Activated T-helper 1 cell treated with anti-CD3 and anti-CD28 coated beads, Interleukin-12 subunit alpha, Interleukin-12 subunit beta, Interleukin-2, Interleukin-4 antibody, amounts not matched to agents 30 ng/mL and 10 ng/mL and 1 ng/mL, durations not matched to agents 14 hours and 24 hours and 36 hours (primary cell): ENCODE measurements at regions of chr3 and their contacts with region 1.

Region 1: DNA sequence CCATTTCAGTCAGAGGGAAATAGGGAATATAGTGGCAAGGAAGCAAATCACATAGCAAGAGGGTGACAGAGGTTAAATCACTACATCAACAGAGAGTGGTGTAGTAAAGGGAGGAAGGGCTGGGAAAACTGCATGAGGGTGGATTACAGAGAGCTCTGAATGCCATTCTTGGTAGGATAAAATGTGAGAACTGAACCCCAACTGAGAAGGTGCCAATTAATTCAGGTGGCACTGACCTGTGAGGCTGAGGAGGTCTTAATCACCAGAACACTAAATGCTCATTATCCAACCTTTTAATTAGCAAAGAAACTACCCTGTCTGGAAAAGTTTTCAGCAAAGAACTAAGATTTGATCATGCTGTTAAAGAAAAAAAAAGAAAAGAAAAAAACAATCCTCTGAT is 202.7 kb downstream of the LRRN1 start:
- DNase-seq: no peak
- H3K4me3 Mint-ChIP-seq: no peak overlapping the region
- H3K27ac Mint-ChIP-seq: no peak overlapping the region
- H3K4me1 Mint-ChIP-seq: no peaks in the 10 kb centered on the region
- H3K27me3 Mint-ChIP-seq: no peaks in the 10 kb centered on the region

Region 2: GRCh38 chr3:3799173-3800079 is 202.6 kb before region 1 on chr3 and contains the start of gene LRRN1:
- intact Hi-C with region 1: no loop called
- DNase-seq: no peak
- H3K4me3 Mint-ChIP-seq: peak within 1 kb of the TSS; percentile 78
- H3K27ac Mint-ChIP-seq: no peak within 1 kb of the TSS
- H3K4me1 Mint-ChIP-seq: peaks cover 6% of the 10 kb centered on the region
- H3K27me3 Mint-ChIP-seq: peaks cover 53% of the 10 kb centered on the region
- total RNA-seq, gene LRRN1: not detected in 2 replicates

Region 3: GRCh38 chr3:4036046-4036445 is 34.1 kb after region 1 on chr3:
- intact Hi-C with region 1: loop called (anchors 2 kb)
- DNase-seq: no peak
- H3K4me3 Mint-ChIP-seq: no peak overlapping the region
- H3K27ac Mint-ChIP-seq: no peak overlapping the region
- H3K4me1 Mint-ChIP-seq: no peaks in the 10 kb centered on the region
- H3K27me3 Mint-ChIP-seq: no peaks in the 10 kb centered on the region